Breast epithelium (tissue), 4 donors: ENCODE measurements at regions of chr12 and their contacts with region 1.

Region 1: DNA sequence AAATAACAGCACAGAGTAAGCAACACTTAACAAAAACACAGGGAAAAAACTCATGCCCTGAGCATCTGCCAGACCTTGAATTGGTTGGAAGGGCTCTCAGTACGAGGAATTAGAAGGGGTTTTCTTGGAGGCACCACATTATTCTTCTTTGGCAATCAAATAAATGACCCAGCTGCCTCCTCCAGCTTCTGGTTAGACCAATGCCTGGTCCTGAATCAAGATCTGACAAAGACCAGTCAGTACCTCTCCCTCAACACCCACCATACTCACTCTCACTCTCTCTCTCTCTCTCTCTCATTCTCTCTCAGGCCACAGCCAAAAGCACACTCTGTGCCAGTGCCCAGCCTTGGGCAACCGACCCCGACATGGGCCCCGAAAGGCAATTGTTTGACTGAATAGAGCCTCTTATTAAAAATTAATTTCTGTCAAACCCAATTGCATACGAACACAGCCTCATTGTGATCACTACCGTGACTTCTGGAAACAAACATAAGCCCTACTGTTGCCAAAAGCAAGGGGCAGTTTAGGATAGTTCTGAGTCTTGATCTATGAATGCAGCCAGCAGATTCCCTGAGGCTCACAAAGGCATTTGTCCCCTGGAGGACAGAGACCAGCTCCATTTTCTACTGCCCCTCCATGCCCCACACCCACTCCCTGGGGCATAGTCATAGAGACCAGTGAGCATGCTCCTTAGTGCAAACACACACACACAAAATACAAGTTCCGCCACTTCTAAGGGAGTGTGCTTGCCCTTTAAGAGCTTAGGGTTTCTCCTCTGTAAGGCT is 23.9 kb downstream of the DUSP6 start:
- DNase-seq: no peak
- H3K4me3 ChIP-seq: no peak overlapping the region
- H3K27ac ChIP-seq: peak overlapping the region; percentile 3 to 51
- H3K4me1 ChIP-seq: no peaks in the 10 kb centered on the region
- H3K27me3 ChIP-seq: no peaks in the 10 kb centered on the region
- CTCF ChIP-seq: no peak
- POLR2A ChIP-seq: no peak

Region 2: DNA sequence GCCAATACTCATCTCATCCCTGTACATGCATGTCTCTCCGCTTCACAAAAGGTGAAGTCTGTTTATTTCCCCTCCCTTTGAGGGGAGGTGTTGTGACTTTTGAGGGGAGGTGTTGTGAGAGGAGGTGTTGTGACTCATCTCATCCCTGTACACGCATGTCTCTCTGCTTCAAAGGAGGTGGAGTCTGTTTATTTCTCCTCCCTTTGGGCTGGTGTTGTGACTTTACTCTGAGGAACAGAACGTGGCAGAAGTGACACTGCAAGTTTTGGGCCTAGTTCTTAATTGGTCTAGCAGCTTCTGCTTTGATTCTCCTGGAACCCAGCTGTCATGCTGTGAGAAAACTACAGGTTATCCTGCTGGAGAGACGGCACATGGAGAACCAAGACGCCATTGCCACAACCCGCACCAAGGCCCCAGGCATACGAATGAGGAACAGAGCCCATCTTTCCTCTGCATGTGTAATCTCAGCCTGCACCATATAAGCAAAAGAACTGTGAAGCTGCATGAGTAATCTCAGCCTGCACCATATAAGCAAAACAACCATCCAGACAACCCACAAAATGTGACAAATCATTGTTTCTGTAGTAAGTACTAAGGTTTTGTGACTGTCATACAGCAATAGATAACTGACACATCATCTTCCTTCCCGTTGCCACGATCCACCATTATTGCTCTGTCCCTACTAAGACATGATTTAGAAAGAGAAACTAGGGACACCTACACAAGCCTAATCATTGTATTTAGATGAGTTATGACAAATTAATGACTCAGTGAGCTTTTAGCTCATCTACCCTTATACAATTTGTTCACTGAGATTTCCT is 166.2 kb after region 1 on chr12:
- intact Hi-C with region 1: loop called (anchors 5 kb)
- DNase-seq: no peak
- H3K4me3 ChIP-seq: no peak overlapping the region
- H3K27ac ChIP-seq: no peak overlapping the region
- H3K4me1 ChIP-seq: no peaks in the 10 kb centered on the region
- H3K27me3 ChIP-seq: no peaks in the 10 kb centered on the region
- CTCF ChIP-seq: no peak
- POLR2A ChIP-seq: no peak